ENCODE measurements at regions of chr13 and their contacts with region 1.

Region 1: GRCh38 chr13:99867535-99868257 is 103.9 kb downstream of the ZIC5 start:
- DNase-seq: no peak
- ATAC-seq: no peak
- H3K4me3 ChIP-seq: no peak overlapping the region
- H3K27ac ChIP-seq: no peak overlapping the region
- H3K4me1 ChIP-seq: no peaks in the 10 kb centered on the region
- H3K27me3 ChIP-seq: no peaks in the 10 kb centered on the region
- CTCF ChIP-seq: no peak

Region 2: GRCh38 chr13:99464441-99464949 is 403.2 kb before region 1 on chr13:
- CTCF ChIA-PET with region 1: no interaction called
- POLR2A ChIA-PET with region 1: no interaction called
- in situ Hi-C with region 1: no loop called
- intact Hi-C with region 1: no loop called
- DNase-seq: no peak
- ATAC-seq: no peak
- H3K4me3 ChIP-seq: no peak overlapping the region
- H3K27ac ChIP-seq: no peak overlapping the region
- H3K4me1 ChIP-seq: no peaks in the 10 kb centered on the region
- H3K27me3 ChIP-seq: no peaks in the 10 kb centered on the region
- CTCF ChIP-seq: no peak

Region 3: GRCh38 chr13:100019780-100020356 is 152.2 kb after region 1 on chr13:
- CTCF ChIA-PET with region 1: no interaction called
- POLR2A ChIA-PET with region 1: interaction called, 12 read pairs
- in situ Hi-C with region 1: no loop called
- intact Hi-C with region 1: no loop called
- DNase-seq: no peak
- ATAC-seq: no peak
- H3K4me3 ChIP-seq: no peak overlapping the region
- H3K27ac ChIP-seq: no peak overlapping the region
- H3K4me1 ChIP-seq: no peaks in the 10 kb centered on the region
- H3K27me3 ChIP-seq: no peaks in the 10 kb centered on the region
- CTCF ChIP-seq: no peak

Measured in Panc1 (cell line).